Adrenal gland (tissue), 19 donors: ENCODE measurements at regions of chr11 and their contacts with region 1.

Region 1: DNA sequence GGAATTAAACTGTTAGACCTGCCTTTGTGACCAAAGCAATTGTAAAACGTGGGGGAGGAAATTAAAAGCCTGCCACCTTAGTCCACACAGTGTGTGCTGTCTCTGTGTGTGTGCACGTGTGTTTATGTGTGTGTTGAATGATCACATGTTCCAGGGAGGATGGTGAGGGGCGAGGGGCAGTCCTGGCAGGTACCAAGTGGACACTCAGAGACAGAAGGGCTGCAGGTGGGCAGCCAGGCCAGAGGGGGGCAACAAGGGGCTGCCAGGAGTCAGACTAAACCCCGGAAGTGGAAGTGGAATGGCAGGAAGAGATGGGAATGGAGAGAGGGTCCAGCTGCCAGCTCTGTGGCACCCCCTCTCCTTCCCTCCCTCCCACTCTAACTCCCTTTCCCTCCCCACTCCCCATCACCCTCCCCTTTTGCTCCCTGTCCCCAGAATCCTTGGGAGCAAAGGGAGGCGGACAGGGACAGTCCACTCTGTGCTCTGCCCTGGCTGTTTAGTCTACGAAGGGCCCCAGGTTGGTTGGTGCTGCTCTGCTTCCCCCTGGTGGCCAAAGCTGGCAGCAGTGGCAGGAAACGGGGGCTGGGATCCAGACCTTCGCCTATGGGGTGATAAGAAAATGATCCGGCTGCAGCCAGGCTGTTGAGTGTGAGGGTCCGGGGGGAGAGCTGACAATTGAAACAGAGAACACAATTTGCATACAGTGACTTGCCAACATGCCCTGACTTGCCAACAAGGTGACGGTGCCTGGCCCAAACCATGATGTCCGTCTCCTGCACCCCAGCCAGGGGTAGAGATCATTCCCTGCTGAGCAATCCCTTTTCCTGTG is 24.4 kb downstream of the P2RY2 start:
- DNase-seq: peak; percentile 76 to 88 (median 81)
- H3K4me3 ChIP-seq: no peak overlapping the region
- H3K27ac ChIP-seq: peak overlapping the region in 1 of 5 donors; percentile 15
- H3K4me1 ChIP-seq: peaks cover 8 to 25% of the 10 kb centered on the region in 2 donors
- H3K27me3 ChIP-seq: no peaks in the 10 kb centered on the region
- CTCF ChIP-seq: peak; percentile 73 to 94 (median 90)
- POLR2A ChIP-seq: no peak

Region 2: GRCh38 chr11:73184953-73185671 is 57.4 kb before region 1 on chr11:
- intact Hi-C with region 1: loop called in 1 of 2 experiments (anchors 5 kb)
- DNase-seq: peak; percentile 61 to 83 (median 78)
- H3K4me3 ChIP-seq: no peak overlapping the region
- H3K27ac ChIP-seq: no peak overlapping the region
- H3K4me1 ChIP-seq: peaks cover 10 to 15% of the 10 kb centered on the region in 2 donors
- H3K27me3 ChIP-seq: no peaks in the 10 kb centered on the region
- CTCF ChIP-seq: peak; percentile 80 to 95 (median 88)
- POLR2A ChIP-seq: no peak

Region 3: GRCh38 chr11:73283276-73284030 is 41.0 kb after region 1 on chr11:
- intact Hi-C with region 1: loop called in 1 of 2 experiments (anchors 2 kb)
- DNase-seq: peak in 1 of 7 donors; percentile 30
- H3K4me3 ChIP-seq: no peak overlapping the region
- H3K27ac ChIP-seq: peak overlapping the region in 2 of 5 donors; percentile 26
- H3K4me1 ChIP-seq: peaks cover 0 to 13% of the 10 kb centered on the region in 2 donors
- H3K27me3 ChIP-seq: no peaks in the 10 kb centered on the region
- CTCF ChIP-seq: no peak
- POLR2A ChIP-seq: no peak

Region 4: DNA sequence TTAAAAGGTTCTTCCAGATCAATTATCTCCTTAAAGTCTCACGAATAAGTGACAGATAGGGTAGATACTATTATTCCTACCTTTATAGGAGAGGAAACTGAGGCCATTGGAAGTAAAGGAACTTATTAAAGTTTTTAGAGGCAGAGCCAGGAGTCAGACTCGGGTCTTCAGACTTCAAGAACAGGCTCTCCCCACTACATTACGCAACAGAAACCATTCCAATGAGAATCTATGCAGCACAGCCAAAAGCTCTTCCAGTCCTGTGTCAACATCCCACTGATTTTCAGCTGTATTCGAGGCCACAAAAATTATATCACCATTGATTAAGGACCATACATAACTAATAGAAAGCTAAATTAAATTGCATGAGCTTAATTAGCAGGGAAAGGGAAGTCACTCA is 211.1 kb after region 1 on chr11:
- intact Hi-C with region 1: no loop called
- DNase-seq: no peak
- H3K4me3 ChIP-seq: no peak overlapping the region
- H3K27ac ChIP-seq: no peak overlapping the region
- H3K4me1 ChIP-seq: peaks cover 0 to 9% of the 10 kb centered on the region in 2 donors
- H3K27me3 ChIP-seq: no peaks in the 10 kb centered on the region
- CTCF ChIP-seq: no peak
- POLR2A ChIP-seq: no peak